Activated CD4-positive, alpha-beta memory T cell treated with anti-CD3 and anti-CD28 coated beads for 36 hours (primary cell): ENCODE measurements at regions of chr13 and their contacts with region 1.

Region 1: GRCh38 chr13:39196958-39197646 is 158.8 kb downstream of the NHLRC3 start:
- DNase-seq: peak; percentile 16
- H3K4me3 Mint-ChIP-seq: peak overlapping the region; percentile 7
- H3K27ac Mint-ChIP-seq: peak overlapping the region; percentile 66
- H3K4me1 Mint-ChIP-seq: peaks cover 16% of the 10 kb centered on the region
- H3K27me3 Mint-ChIP-seq: peaks cover 6% of the 10 kb centered on the region

Region 2: GRCh38 chr13:38349390-38350113 is 847.5 kb before region 1 on chr13 and contains the start of gene UFM1:
- CTCF ChIA-PET with region 1: no interaction called
- POLR2A ChIA-PET with region 1: no interaction called
- intact Hi-C with region 1: loop called (anchors 1 kb)
- DNase-seq: peak; percentile 91
- H3K4me3 Mint-ChIP-seq: peak within 1 kb of the TSS; percentile 100
- H3K27ac Mint-ChIP-seq: peak within 1 kb of the TSS; percentile 99
- H3K4me1 Mint-ChIP-seq: peaks cover 35% of the 10 kb centered on the region
- H3K27me3 Mint-ChIP-seq: no peaks in the 10 kb centered on the region
- total RNA-seq, gene UFM1: 45.9 to 46.6 TPM

Region 3: GRCh38 chr13:39095500-39095899 is 101.6 kb before region 1 on chr13:
- CTCF ChIA-PET with region 1: no interaction called
- POLR2A ChIA-PET with region 1: interaction called, 3 read pairs
- intact Hi-C with region 1: loop called (anchors 1 kb)
- DNase-seq: no peak
- H3K4me3 Mint-ChIP-seq: peak overlapping the region; percentile 54
- H3K27ac Mint-ChIP-seq: peak overlapping the region; percentile 87
- H3K4me1 Mint-ChIP-seq: peaks cover 35% of the 10 kb centered on the region
- H3K27me3 Mint-ChIP-seq: no peaks in the 10 kb centered on the region

Region 4: GRCh38 chr13:39159393-39159792 is 37.7 kb before region 1 on chr13:
- CTCF ChIA-PET with region 1: interaction called, 3 read pairs
- POLR2A ChIA-PET with region 1: interaction called, 4 read pairs
- intact Hi-C with region 1: loop called (anchors 1 kb)
- DNase-seq: peak; percentile 37
- H3K4me3 Mint-ChIP-seq: no peak overlapping the region
- H3K27ac Mint-ChIP-seq: peak overlapping the region; percentile 55
- H3K4me1 Mint-ChIP-seq: peaks cover 22% of the 10 kb centered on the region
- H3K27me3 Mint-ChIP-seq: peaks cover 6% of the 10 kb centered on the region

Region 5: DNA sequence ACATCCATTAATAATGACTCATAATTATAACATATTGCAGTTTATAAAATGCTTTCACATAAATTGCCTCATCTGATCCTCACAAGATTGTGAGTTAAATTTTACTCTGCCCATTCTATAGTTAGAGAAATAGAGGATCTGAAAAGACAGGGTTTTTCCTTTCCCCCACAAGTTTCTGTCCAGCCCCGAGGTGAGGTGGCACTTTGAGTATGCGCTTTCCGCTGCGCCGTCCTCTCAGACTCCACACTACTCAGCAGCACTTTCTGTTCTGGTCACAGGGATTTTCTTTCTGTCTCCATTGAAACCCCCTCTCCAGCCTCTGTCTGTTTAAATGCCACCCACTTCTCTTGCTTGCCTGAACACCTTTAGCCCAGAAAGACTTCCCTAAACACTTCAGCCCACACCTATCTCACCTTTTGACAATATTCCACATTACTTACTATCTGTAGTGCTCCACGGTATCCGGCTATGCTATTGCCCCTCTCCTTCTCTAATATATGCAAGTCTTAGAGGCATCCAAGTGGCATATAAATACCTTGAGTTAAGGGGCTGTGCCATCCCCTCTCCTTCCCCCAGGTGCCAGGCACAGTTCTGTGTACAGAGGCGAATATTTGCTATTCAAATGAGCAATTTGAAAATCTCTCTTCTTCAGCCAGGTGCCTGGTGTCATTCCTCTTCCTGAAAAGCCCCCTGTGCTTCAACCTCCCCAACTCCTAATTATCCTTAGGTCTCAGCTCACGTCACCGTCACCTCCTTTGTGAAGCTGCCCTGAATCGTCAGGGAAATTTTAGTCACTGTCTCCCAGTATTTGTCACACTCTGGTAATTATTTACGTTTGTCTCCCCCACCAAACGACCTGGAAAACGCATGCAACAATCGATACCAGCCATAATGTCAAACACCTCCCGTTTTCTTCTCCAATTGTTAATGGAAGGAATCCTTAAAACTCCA is 109.8 kb after region 1 on chr13:
- CTCF ChIA-PET with region 1: no interaction called
- POLR2A ChIA-PET with region 1: no interaction called
- intact Hi-C with region 1: loop called (anchors 1 kb)
- DNase-seq: peak; percentile 72
- H3K4me3 Mint-ChIP-seq: peak overlapping the region; percentile 7
- H3K27ac Mint-ChIP-seq: peak overlapping the region; percentile 28
- H3K4me1 Mint-ChIP-seq: peaks cover 21% of the 10 kb centered on the region
- H3K27me3 Mint-ChIP-seq: peaks cover 8% of the 10 kb centered on the region